Endothelial cell of umbilical vein (primary cell): ENCODE measurements at regions of chr9 and their contacts with region 1.

Region 1: DNA sequence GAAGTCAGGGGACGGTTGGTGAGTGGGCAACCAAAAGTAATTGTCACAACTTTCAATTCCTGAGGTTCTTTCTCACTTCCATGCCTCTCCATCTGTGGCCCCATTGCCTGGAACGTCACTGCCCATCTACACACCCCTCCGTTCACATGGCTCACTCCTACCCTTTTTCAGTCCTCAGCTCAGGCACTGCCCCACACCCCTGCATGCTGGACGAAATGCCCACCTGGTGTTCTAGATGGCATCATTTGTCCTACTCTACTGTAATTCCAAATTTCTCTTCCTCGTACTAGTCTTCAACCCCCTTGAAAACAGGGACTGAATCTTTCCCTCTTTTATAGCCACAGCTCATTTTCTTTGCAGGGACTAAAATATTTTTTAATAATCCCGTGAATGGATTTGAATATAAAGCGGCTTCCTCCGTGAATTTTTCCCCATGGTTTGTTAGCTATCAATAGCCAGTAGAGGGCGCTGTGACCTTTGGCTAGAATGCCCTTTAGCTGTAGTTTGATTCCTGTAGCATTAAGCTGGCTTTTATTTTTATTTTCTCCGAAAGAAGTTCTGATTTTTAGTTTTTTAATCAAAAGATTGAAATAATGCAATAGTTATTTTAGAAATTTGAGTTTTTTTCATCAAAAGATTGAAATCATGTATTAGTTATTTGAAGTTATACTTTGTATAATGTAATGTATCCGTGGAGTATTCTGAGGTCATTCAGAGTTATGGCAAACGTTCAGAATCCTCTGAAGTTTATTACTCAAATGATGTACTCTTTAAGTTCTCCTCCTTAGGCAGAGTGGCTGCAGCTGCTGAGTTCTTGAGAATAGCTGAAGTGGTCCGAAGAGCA is 232.1 kb downstream of the SH3GL2 start:
- DNase-seq: peak; percentile 59
- H3K4me3 ChIP-seq: no peak overlapping the region
- H3K27ac ChIP-seq: no peak overlapping the region
- H3K4me1 ChIP-seq: no peaks in the 10 kb centered on the region
- H3K27me3 ChIP-seq: peaks cover 8 to 9% of the 10 kb centered on the region in 2 experiments
- CTCF ChIP-seq: peak; percentile 63 to 69
- POLR2A ChIP-seq: no peak

Region 2: GRCh38 chr9:17824191-17824590 is 13.2 kb after region 1 on chr9:
- CTCF ChIA-PET with region 1: interaction called, 16 read pairs
- POLR2A ChIA-PET with region 1: no interaction called
- dilution Hi-C with region 1: no loop called
- intact Hi-C with region 1: no loop called
- DNase-seq: peak; percentile 7
- H3K4me3 ChIP-seq: no peak overlapping the region
- H3K27ac ChIP-seq: no peak overlapping the region
- H3K4me1 ChIP-seq: no peaks in the 10 kb centered on the region
- H3K27me3 ChIP-seq: no peaks in the 10 kb centered on the region
- CTCF ChIP-seq: no peak
- POLR2A ChIP-seq: no peak

Region 3: GRCh38 chr9:17837965-17838364 is 27.0 kb after region 1 on chr9:
- CTCF ChIA-PET with region 1: interaction called, 17 read pairs
- POLR2A ChIA-PET with region 1: no interaction called
- dilution Hi-C with region 1: no loop called
- intact Hi-C with region 1: no loop called
- DNase-seq: no peak
- H3K4me3 ChIP-seq: no peak overlapping the region
- H3K27ac ChIP-seq: no peak overlapping the region
- H3K4me1 ChIP-seq: no peaks in the 10 kb centered on the region
- H3K27me3 ChIP-seq: no peaks in the 10 kb centered on the region
- CTCF ChIP-seq: no peak
- POLR2A ChIP-seq: no peak

Region 4: DNA sequence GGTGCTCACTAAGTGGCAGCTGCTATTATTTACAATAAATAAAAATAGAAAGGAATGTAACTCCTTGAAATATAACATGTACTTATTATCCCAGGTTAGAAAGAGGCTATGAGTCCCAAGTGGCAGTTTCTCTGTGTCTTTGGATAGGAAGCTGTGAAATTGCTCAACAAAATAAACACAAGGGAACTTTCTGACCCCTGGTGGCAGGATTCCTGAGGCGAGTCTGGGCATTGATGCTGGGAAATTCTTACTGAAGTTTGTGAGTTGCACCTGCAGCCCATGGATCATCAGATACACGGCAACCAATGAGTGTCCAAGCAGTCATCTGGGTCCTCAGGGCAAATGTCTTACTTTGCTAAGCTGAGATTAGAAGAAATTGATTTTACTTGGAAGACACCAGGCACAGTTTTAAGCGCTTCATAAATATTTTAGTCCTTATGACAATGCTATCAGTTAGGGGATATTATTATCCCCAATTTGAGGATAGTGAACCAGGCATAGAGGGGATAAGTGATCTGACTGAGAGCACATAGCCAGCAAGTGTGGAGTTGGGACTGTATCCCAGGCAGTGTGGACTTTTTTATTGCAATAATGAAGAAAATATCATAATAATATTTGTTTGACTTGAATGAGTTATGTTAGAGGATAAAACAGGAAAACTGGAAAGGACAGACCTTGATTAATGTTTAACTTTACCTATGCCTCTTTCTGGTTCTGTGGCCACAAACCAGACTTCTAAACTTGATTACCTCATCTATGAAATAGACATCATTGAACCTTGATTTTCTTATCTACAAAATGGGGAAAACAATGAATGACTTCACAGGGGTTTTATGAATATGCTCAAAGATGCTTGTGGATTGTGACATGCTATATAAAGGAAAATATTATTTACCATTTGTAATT is 397.5 kb after region 1 on chr9:
- CTCF ChIA-PET with region 1: interaction called, 150 read pairs
- POLR2A ChIA-PET with region 1: no interaction called
- dilution Hi-C with region 1: no loop called
- intact Hi-C with region 1: loop called (anchors 1 kb)
- DNase-seq: peak; percentile 52
- H3K4me3 ChIP-seq: no peak overlapping the region
- H3K27ac ChIP-seq: no peak overlapping the region
- H3K4me1 ChIP-seq: no peaks in the 10 kb centered on the region
- H3K27me3 ChIP-seq: no peaks in the 10 kb centered on the region
- CTCF ChIP-seq: peak; percentile 39 to 62
- POLR2A ChIP-seq: no peak

Region 5: GRCh38 chr9:18824095-18824666 is 1013.2 kb after region 1 on chr9:
- CTCF ChIA-PET with region 1: interaction called, 13 read pairs
- POLR2A ChIA-PET with region 1: no interaction called
- dilution Hi-C with region 1: no loop called
- intact Hi-C with region 1: no loop called
- DNase-seq: peak; percentile 31
- H3K4me3 ChIP-seq: no peak overlapping the region
- H3K27ac ChIP-seq: no peak overlapping the region
- H3K4me1 ChIP-seq: peaks cover 3% of the 10 kb centered on the region
- H3K27me3 ChIP-seq: no peaks in the 10 kb centered on the region
- CTCF ChIP-seq: peak in 1 of 2 donors; percentile 53
- POLR2A ChIP-seq: no peak

Region 6: GRCh38 chr9:19028835-19029451 is 1218.0 kb after region 1 on chr9:
- CTCF ChIA-PET with region 1: interaction called, 136 read pairs
- POLR2A ChIA-PET with region 1: no interaction called
- dilution Hi-C with region 1: no loop called
- intact Hi-C with region 1: loop called (anchors 1 kb)
- DNase-seq: peak; percentile 59
- H3K4me3 ChIP-seq: no peak overlapping the region
- H3K27ac ChIP-seq: no peak overlapping the region
- H3K4me1 ChIP-seq: no peaks in the 10 kb centered on the region
- H3K27me3 ChIP-seq: no peaks in the 10 kb centered on the region
- CTCF ChIP-seq: peak; percentile 58 to 66
- POLR2A ChIP-seq: no peak

Region 7: GRCh38 chr9:19456996-19457692 is 1646.2 kb after region 1 on chr9:
- CTCF ChIA-PET with region 1: interaction called, 18 read pairs
- POLR2A ChIA-PET with region 1: no interaction called
- dilution Hi-C with region 1: no loop called
- intact Hi-C with region 1: no loop called
- DNase-seq: peak; percentile 80
- H3K4me3 ChIP-seq: no peak overlapping the region
- H3K27ac ChIP-seq: no peak overlapping the region
- H3K4me1 ChIP-seq: peaks cover 6% of the 10 kb centered on the region
- H3K27me3 ChIP-seq: no peaks in the 10 kb centered on the region
- CTCF ChIP-seq: peak; percentile 88 to 93
- POLR2A ChIP-seq: no peak